CD8-positive, alpha-beta memory T cell (primary cell): ENCODE measurements at regions of chr15 and their contacts with region 1.

Region 1: GRCh38 chr15:72473614-72474465 is at the start of gene ARIH1:
- DNase-seq: peak; percentile 95 to 98 (median 96)
- H3K4me3 ChIP-seq: peak within 1 kb of the TSS; percentile 93
- H3K4me3 Mint-ChIP-seq: peak within 1 kb of the TSS; percentile 95 to 99 (median 97)
- H3K27ac ChIP-seq: peak within 1 kb of the TSS; percentile 100
- H3K27ac Mint-ChIP-seq: peak within 1 kb of the TSS; percentile 97 to 100 (median 99)
- H3K4me1 ChIP-seq: peaks cover 45% of the 10 kb centered on the region
- H3K4me1 Mint-ChIP-seq: peaks cover 49 to 61% (median 60%) of the 10 kb centered on the region in 3 donors
- H3K27me3 ChIP-seq: no peaks in the 10 kb centered on the region
- H3K27me3 Mint-ChIP-seq: peaks cover 0 to 7% of the 10 kb centered on the region in 2 donors
- total RNA-seq, gene ARIH1: 153 to 164 TPM

Region 2: DNA sequence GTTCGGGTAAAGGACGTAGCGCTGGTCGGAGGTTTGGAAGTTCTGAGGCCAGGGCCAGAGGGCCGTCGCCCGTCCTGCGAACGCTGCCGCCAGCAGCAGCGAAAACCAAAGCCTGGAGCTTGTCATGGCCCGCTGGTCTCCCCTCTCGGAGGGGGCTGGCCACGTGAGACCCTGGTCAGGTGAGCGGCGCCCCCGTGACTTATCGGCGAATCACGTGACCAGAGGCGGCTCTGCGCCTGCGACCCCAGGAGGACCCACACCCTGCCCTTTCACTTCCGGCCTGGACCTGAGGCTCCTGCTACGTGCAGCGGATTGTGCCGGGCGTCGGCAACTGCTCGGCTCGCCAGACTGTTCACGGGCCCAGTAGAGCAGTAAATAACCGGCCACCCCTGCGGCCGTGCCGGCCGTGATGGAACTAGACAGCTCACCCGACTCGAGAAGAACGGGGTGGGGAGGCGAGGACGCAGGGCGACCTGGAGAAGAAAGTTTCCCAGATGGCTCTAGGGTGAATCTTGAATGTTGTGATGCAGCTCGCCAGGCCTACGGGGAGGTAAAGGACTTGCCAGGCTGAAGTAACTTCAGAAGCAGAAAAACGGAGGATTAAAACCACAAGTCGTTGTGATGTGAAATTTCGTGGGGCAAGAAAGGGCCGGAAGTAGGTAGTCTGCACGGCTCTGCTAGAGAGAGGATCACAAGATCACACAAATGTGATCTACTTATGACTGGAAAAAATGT is 97.8 kb before region 1 on chr15 and contains the start of gene HEXA:
- CTCF ChIA-PET with region 1: interaction called, 6 read pairs
- POLR2A ChIA-PET with region 1: interaction called, 34 read pairs
- DNase-seq: peak; percentile 96 to 100 (median 98)
- H3K4me3 ChIP-seq: peak within 1 kb of the TSS; percentile 80
- H3K4me3 Mint-ChIP-seq: peak within 1 kb of the TSS; percentile 89 to 96 (median 93)
- H3K27ac ChIP-seq: peak within 1 kb of the TSS; percentile 88
- H3K27ac Mint-ChIP-seq: peak within 1 kb of the TSS; percentile 95 to 99 (median 97)
- H3K4me1 ChIP-seq: peaks cover 29% of the 10 kb centered on the region
- H3K4me1 Mint-ChIP-seq: peaks cover 46 to 65% (median 56%) of the 10 kb centered on the region in 3 donors
- H3K27me3 ChIP-seq: no peaks in the 10 kb centered on the region
- H3K27me3 Mint-ChIP-seq: peaks cover 0 to 12% of the 10 kb centered on the region in 2 donors
- total RNA-seq, gene HEXA: 75.0 to 80.5 TPM

Region 3: DNA sequence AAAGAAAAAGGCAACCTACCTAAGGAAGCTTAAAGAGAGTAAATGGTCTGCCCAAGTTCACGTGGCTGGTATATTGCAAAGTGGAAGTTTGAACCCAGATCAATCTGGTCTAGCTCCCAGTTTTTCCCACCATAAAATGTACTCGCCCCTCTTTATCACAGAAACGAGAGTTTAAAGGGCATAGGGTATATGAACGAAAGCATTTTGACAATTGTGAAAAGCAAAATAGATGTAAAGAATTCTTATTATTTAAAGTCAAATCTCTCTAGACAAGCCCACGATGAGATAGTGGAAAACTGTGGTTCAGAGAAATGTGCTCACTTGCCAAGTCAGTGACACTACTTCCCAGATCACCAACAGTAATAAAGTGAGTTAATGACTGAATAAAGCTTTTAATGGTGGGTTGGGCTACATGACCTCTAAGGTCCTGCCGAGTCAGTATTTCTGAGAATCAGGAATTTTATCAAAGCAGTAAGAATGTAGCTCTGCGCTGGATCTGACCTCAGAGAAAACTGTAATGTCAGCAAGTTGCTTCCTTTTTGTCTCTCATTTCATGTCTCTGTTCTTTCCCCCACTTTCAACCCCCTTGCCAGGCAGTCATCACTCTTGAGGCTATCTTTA is 555.1 kb after region 1 on chr15:
- CTCF ChIA-PET with region 1: no interaction called
- POLR2A ChIA-PET with region 1: no interaction called
- DNase-seq: no peak
- H3K4me3 ChIP-seq: no peak overlapping the region
- H3K4me3 Mint-ChIP-seq: no peak overlapping the region
- H3K27ac ChIP-seq: no peak overlapping the region
- H3K27ac Mint-ChIP-seq: no peak overlapping the region
- H3K4me1 ChIP-seq: no peaks in the 10 kb centered on the region
- H3K4me1 Mint-ChIP-seq: no peaks in the 10 kb centered on the region
- H3K27me3 ChIP-seq: no peaks in the 10 kb centered on the region
- H3K27me3 Mint-ChIP-seq: peaks cover 12 to 61% of the 10 kb centered on the region in 2 donors